Heart right ventricle (tissue), 16 donors: ENCODE measurements at regions of chr17 and their contacts with region 1.

Region 1: DNA sequence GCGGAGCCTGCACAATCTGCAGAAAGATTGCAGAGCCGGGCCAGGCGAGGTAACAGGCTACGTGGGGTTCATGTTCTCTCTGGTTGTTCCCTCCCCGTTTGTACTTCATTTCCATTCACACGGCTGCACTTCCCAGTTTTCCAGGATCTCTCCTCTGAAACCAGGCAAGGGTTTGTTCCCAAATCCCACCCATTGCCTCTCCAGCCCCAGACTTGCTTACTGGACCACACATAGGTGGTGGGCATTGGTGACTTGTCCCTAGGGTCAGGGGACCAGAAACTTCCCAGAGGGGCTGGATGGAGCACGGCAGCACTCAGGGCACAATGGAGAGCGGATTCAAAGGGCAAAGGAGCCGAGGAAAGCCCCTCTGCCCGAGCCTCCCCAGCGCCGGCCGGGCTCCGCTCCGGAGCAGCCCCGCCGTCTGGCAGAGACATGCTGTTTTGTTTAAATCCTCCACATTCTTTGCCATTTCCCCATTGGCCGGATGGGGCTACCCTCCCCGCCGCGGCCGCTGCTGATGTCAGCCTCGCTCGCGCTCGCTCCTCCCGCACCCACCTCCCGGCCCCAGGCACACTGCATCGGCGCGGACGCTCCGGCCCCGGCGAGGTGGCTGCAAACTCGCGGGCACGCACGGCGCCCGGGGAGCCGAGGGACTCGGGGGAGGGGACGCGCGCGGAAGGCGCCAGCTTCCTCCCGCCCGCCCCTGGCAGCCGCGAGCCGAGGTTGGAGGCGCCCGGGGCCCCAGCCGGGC is at the start of gene PITPNC1:
- DNase-seq: peak; percentile 87 to 89
- ATAC-seq: peak; percentile 80 to 89 (median 84)
- H3K4me3 ChIP-seq: peak within 1 kb of the TSS; percentile 73 to 95 (median 92)
- H3K27ac ChIP-seq: peak within 1 kb of the TSS; percentile 93 to 97 (median 96)
- H3K4me1 ChIP-seq: peaks cover 5 to 43% (median 22%) of the 10 kb centered on the region in 9 donors
- H3K27me3 ChIP-seq: no peaks in the 10 kb centered on the region
- CTCF ChIP-seq: peak in 4 of 9 donors; percentile 12 to 24 (median 20)
- total RNA-seq, gene PITPNC1: 7.4 to 28.0 (median 11.5) TPM

Region 2: DNA sequence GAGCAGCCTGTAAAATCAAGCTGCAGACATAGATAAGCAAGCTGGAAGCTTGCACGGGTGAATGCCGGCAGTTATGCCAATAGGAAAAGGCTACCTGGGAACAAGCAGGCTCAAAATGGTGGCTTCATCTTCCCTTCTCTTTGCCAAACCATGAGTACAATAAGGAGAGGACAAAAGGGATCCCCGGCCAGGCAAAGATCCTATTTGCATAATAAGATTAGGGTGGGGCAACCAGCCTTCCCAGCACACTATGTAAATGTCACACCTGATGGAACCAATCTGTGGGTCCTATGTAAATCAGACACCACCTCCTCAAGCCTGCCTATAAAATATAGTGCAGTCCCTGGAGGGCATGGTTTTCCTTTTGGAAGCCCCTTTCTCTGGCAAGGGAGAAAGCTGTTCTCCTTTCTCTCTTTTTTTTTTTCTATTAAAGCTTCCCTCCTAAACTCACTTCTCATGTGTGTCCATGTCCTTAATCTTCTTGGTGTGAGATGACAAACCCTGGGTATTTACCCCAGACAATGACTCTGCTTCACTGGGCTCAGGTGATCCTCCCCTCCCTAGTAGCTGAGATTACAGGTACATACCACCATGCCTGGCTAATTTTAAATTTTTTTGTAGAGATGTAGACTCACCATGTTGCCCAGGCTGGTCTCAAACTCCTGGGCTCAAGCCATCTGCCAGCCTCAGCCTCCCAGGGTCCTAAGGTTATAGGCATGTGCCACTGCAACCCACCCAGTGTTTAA is 54.7 kb before region 1 on chr17:
- intact Hi-C with region 1: no loop called
- DNase-seq: no peak
- ATAC-seq: no peak
- H3K4me3 ChIP-seq: no peak overlapping the region
- H3K27ac ChIP-seq: no peak overlapping the region
- H3K4me1 ChIP-seq: no peaks in the 10 kb centered on the region
- H3K27me3 ChIP-seq: no peaks in the 10 kb centered on the region
- CTCF ChIP-seq: no peak

Region 3: GRCh38 chr17:67475236-67475937 is 98.5 kb after region 1 on chr17:
- intact Hi-C with region 1: loop called (anchors 1 to 5 kb)
- DNase-seq: peak; percentile 76 to 83
- ATAC-seq: peak; percentile 54 to 85 (median 70)
- H3K4me3 ChIP-seq: peak overlapping the region in 1 of 10 donors; percentile 13
- H3K27ac ChIP-seq: peak overlapping the region; percentile 54 to 88 (median 80)
- H3K4me1 ChIP-seq: peaks cover 0 to 54% (median 31%) of the 10 kb centered on the region in 9 donors
- H3K27me3 ChIP-seq: no peaks in the 10 kb centered on the region
- CTCF ChIP-seq: peak; percentile 65 to 94 (median 85)

Region 4: GRCh38 chr17:67559377-67559966 is 182.6 kb after region 1 on chr17:
- intact Hi-C with region 1: loop called in 1 of 10 experiments (anchors 10 kb)
- DNase-seq: no peak
- ATAC-seq: no peak
- H3K4me3 ChIP-seq: no peak overlapping the region
- H3K27ac ChIP-seq: no peak overlapping the region
- H3K4me1 ChIP-seq: peaks cover 0 to 13% (median 0%) of the 10 kb centered on the region in 9 donors
- H3K27me3 ChIP-seq: no peaks in the 10 kb centered on the region
- CTCF ChIP-seq: peak in 5 of 9 donors; percentile 13 to 41 (median 24)

Region 5: GRCh38 chr17:67629971-67630320 is 253.0 kb after region 1 on chr17:
- intact Hi-C with region 1: loop called in 8 of 10 experiments (anchors 2 to 10 kb)
- DNase-seq: no peak
- ATAC-seq: peak in 2 of 8 donors; percentile 35 to 50
- H3K4me3 ChIP-seq: no peak overlapping the region
- H3K27ac ChIP-seq: peak overlapping the region in 2 of 10 donors; percentile 12 to 31
- H3K4me1 ChIP-seq: peaks cover 0 to 36% (median 13%) of the 10 kb centered on the region in 9 donors
- H3K27me3 ChIP-seq: no peaks in the 10 kb centered on the region
- CTCF ChIP-seq: peak in 7 of 9 donors; percentile 36 to 65 (median 53)